ENCODE measurements at regions of chr9 and their contacts with region 1.

Region 1: GRCh38 chr9:108272349-108272899 is 583.4 kb downstream of the ACTL7B start:
- H3K4me3 Mint-ChIP-seq: peak overlapping the region; percentile 68
- H3K27ac Mint-ChIP-seq: peak overlapping the region; percentile 91
- H3K4me1 Mint-ChIP-seq: peaks cover 44% of the 10 kb centered on the region
- H3K27me3 Mint-ChIP-seq: no peaks in the 10 kb centered on the region

Region 2: GRCh38 chr9:107465467-107466451 is 806.7 kb before region 1 on chr9:
- intact Hi-C with region 1: loop called (anchors 5 kb)
- H3K4me3 Mint-ChIP-seq: peak overlapping the region; percentile 81
- H3K27ac Mint-ChIP-seq: peak overlapping the region; percentile 67
- H3K4me1 Mint-ChIP-seq: peaks cover 5% of the 10 kb centered on the region
- H3K27me3 Mint-ChIP-seq: peaks cover 17% of the 10 kb centered on the region

Region 3: DNA sequence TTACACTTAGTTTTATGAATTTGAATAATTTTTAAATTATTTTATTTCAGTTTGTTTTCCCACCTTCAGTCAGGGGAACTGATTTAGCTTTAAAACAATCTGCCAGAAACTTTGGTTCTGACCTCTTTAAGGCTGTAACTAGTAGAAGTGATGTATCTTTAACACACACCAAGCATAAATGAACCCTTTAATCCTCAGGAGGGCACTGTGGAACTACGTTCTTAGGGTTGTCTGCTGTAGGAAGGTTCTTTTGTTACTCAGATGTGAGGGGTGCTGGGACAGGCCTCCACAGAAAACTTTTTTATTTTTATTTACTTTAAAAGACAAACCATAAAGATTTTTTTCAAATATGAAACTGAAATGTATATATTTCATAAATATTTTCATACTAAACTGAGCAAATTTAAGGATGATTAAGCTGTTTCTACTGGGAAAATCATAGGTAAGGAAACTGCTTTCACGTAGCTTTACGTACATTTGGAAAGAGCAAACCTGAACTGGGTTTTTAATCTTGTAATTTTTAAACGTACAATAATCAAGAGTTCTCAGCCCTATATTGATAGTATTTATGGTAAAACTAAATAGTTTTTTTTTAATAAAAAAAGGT is 788.2 kb before region 1 on chr9:
- intact Hi-C with region 1: loop called (anchors 1 kb)
- H3K4me3 Mint-ChIP-seq: no peak overlapping the region
- H3K27ac Mint-ChIP-seq: no peak overlapping the region
- H3K4me1 Mint-ChIP-seq: peaks cover 40% of the 10 kb centered on the region
- H3K27me3 Mint-ChIP-seq: no peaks in the 10 kb centered on the region

Region 4: DNA sequence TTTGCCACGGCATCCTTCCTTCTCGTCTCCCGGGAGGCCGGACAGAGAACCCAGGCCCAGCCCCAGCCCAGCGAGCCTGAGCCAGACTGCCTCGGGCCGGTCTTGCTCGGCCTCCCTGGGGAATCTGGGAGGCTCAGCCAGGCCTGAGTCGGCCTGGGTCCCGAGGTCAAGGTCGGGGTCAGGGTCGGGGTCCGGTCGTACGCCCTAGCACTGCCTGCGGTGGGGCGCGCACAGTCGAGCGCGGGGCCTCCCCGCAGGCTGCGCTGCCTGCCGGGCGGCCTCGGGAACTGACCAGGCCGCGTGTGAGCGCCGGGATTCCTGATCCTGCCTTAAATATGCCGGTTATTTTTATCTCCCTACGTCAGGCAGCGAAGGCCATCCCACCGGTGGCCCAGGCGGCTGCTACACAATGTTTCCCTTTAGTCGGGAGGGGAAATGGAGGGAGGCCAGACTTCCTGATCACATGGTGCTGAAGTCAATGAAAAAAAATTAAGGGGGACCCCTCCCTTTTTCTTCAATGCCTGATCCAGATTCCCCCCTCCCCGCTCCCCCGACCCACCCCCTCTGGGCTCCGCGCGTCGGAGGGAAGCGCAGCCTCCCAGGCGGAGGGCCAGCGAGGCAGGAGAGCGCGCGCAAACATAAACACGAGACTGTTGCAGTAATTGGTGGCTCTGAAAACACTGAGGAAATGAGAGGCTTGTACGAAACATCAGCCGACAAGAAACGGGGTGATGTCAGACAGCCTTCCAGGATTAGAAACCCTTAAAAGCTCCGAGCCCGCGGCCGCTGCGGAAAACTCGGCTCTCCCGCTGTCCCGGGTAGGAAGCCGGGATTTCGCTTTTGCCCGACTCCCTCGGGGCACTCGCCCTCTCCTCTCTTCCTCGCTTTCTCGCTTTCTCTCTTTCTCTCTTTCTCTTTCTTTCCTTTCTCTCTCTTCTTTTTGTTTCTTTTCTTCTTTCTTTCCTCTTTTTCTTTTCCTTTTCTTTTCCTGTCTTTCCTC is 634.7 kb before region 1 on chr9:
- intact Hi-C with region 1: loop called (anchors 5 kb)
- H3K4me3 Mint-ChIP-seq: peak overlapping the region; percentile 86
- H3K27ac Mint-ChIP-seq: peak overlapping the region; percentile 99
- H3K4me1 Mint-ChIP-seq: peaks cover 53% of the 10 kb centered on the region
- H3K27me3 Mint-ChIP-seq: no peaks in the 10 kb centered on the region

Region 5: DNA sequence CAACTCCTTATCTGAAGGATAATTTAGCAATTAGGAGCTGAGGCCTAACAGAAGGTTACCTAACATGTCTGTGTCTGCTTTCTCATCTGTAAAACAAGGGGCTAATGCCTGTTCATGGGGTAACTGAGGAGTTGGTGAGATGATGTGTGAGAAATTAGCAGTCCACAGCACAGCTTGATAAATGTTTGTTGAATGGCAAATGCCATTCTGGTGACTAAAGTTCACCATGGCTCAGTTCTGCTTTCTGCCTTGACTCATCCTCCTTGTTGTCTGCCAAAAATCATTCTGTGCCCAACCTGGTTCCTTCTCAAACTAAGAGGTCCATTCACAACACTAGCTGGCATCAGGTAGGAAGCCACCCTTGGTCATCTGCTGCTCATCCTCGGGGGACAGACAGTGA is 230.9 kb before region 1 on chr9:
- intact Hi-C with region 1: no loop called
- H3K4me3 Mint-ChIP-seq: no peak overlapping the region
- H3K27ac Mint-ChIP-seq: no peak overlapping the region
- H3K4me1 Mint-ChIP-seq: peaks cover 21% of the 10 kb centered on the region
- H3K27me3 Mint-ChIP-seq: peaks cover 7% of the 10 kb centered on the region